ENCODE measurements at regions of chr2 and their contacts with region 1.

Region 1: GRCh38 chr2:219597552-219598307 is at the start of gene STK11IP:
- DNase-seq: peak; percentile 74 to 95 (median 90)
- ATAC-seq: peak; percentile 84
- H3K4me3 ChIP-seq: peak within 1 kb of the TSS; percentile 79 to 90
- H3K4me3 Mint-ChIP-seq: peak within 1 kb of the TSS; percentile 97
- H3K27ac ChIP-seq: peak within 1 kb of the TSS; percentile 77 to 83
- H3K27ac Mint-ChIP-seq: peak within 1 kb of the TSS; percentile 97
- H3K4me1 ChIP-seq: peaks cover 9% of the 10 kb centered on the region
- H3K4me1 Mint-ChIP-seq: peaks cover 27% of the 10 kb centered on the region
- H3K27me3 ChIP-seq: no peaks in the 10 kb centered on the region
- H3K27me3 Mint-ChIP-seq: no peaks in the 10 kb centered on the region
- CTCF ChIP-seq: no peak
- total RNA-seq, gene STK11IP: 29.7 to 31.5 TPM

Region 2: GRCh38 chr2:218406209-218406948 is 1191.4 kb before region 1 on chr2:
- CTCF ChIA-PET with region 1: no interaction called
- POLR2A ChIA-PET with region 1: no interaction called
- intact Hi-C with region 1: loop called in 1 of 2 experiments (anchors 5 kb)
- DNase-seq: peak; percentile 79 to 98 (median 95)
- ATAC-seq: peak; percentile 68
- H3K4me3 ChIP-seq: peak overlapping the region; percentile 52 to 63
- H3K4me3 Mint-ChIP-seq: peak overlapping the region; percentile 82
- H3K27ac ChIP-seq: peak overlapping the region; percentile 56 to 73
- H3K27ac Mint-ChIP-seq: peak overlapping the region; percentile 94
- H3K4me1 ChIP-seq: peaks cover 49% of the 10 kb centered on the region
- H3K4me1 Mint-ChIP-seq: peaks cover 56% of the 10 kb centered on the region
- H3K27me3 ChIP-seq: no peaks in the 10 kb centered on the region
- H3K27me3 Mint-ChIP-seq: peaks cover 2% of the 10 kb centered on the region
- CTCF ChIP-seq: peak; percentile 59

Region 3: DNA sequence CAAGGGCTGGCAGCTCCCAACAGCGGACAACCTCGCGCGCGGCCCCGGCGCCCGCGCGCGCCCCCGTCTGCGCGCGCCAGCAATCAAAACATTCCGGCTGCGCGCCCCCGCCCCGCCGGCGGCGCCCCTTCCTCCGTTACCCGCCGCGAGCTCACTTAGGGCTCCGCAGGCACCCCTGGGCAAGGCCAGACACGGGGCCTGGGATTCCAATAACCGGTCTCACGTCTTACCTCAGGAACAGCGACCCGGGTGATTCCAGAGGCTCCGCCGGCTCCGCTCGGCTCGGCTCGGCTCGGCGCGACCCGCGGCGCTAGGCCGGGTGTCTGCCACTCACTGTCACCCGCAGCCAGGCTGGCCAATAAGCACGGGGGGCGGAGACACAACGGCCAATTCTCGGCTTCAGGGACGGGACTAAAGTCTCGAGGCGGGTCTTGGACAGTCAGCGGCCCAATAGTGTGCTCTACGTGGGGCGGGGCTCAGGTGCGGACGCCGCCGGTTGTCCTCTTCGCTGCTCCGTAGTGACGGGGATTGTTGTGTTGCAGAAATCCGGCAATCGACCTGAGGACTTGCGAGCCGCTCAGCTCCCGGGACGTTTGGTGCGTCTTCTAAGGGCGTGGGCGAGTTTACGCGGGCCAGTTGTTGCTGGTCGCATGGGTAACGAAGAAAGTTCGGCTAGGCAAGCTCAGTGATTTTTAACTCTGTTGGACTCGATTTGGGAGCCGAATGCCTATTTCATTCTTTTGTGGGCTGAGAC is 368.2 kb before region 1 on chr2 and contains the starts of genes ANKZF1 and ATG9A:
- CTCF ChIA-PET with region 1: no interaction called
- POLR2A ChIA-PET with region 1: no interaction called
- intact Hi-C with region 1: loop called in 1 of 2 experiments (anchors 5 kb)
- DNase-seq: peak; percentile 95 to 99 (median 98)
- ATAC-seq: peak; percentile 96
- H3K4me3 ChIP-seq: peak within 1 kb of the TSS; percentile 83 to 93
- H3K4me3 Mint-ChIP-seq: peak within 1 kb of the TSS; percentile 99
- H3K27ac ChIP-seq: peak within 1 kb of the TSS; percentile 79 to 95
- H3K27ac Mint-ChIP-seq: peak within 1 kb of the TSS; percentile 98
- H3K4me1 ChIP-seq: peaks cover 39% of the 10 kb centered on the region
- H3K4me1 Mint-ChIP-seq: peaks cover 58% of the 10 kb centered on the region
- H3K27me3 ChIP-seq: no peaks in the 10 kb centered on the region
- H3K27me3 Mint-ChIP-seq: no peaks in the 10 kb centered on the region
- CTCF ChIP-seq: no peak
- total RNA-seq, gene ANKZF1: 97.4 to 99.5 TPM
- total RNA-seq, gene ATG9A: 103 to 116 TPM

Region 4: GRCh38 chr2:219498280-219499057 is 99.3 kb before region 1 on chr2 and contains the start of gene GMPPA:
- CTCF ChIA-PET with region 1: interaction called, 5 read pairs
- POLR2A ChIA-PET with region 1: interaction called, 5 read pairs
- intact Hi-C with region 1: loop called in 1 of 2 experiments (anchors 5 kb)
- DNase-seq: peak; percentile 82 to 95 (median 89)
- ATAC-seq: peak; percentile 90
- H3K4me3 ChIP-seq: peak within 1 kb of the TSS; percentile 75 to 83
- H3K4me3 Mint-ChIP-seq: peak within 1 kb of the TSS; percentile 89
- H3K27ac ChIP-seq: peak within 1 kb of the TSS; percentile 52 to 59
- H3K27ac Mint-ChIP-seq: peak within 1 kb of the TSS; percentile 84
- H3K4me1 ChIP-seq: peaks cover 39% of the 10 kb centered on the region
- H3K4me1 Mint-ChIP-seq: peaks cover 35% of the 10 kb centered on the region
- H3K27me3 ChIP-seq: peaks cover 25 to 34% of the 10 kb centered on the region in 2 experiments
- H3K27me3 Mint-ChIP-seq: peaks cover 33% of the 10 kb centered on the region
- CTCF ChIP-seq: no peak
- total RNA-seq, gene GMPPA: 9.4 to 15.0 TPM

Region 5: DNA sequence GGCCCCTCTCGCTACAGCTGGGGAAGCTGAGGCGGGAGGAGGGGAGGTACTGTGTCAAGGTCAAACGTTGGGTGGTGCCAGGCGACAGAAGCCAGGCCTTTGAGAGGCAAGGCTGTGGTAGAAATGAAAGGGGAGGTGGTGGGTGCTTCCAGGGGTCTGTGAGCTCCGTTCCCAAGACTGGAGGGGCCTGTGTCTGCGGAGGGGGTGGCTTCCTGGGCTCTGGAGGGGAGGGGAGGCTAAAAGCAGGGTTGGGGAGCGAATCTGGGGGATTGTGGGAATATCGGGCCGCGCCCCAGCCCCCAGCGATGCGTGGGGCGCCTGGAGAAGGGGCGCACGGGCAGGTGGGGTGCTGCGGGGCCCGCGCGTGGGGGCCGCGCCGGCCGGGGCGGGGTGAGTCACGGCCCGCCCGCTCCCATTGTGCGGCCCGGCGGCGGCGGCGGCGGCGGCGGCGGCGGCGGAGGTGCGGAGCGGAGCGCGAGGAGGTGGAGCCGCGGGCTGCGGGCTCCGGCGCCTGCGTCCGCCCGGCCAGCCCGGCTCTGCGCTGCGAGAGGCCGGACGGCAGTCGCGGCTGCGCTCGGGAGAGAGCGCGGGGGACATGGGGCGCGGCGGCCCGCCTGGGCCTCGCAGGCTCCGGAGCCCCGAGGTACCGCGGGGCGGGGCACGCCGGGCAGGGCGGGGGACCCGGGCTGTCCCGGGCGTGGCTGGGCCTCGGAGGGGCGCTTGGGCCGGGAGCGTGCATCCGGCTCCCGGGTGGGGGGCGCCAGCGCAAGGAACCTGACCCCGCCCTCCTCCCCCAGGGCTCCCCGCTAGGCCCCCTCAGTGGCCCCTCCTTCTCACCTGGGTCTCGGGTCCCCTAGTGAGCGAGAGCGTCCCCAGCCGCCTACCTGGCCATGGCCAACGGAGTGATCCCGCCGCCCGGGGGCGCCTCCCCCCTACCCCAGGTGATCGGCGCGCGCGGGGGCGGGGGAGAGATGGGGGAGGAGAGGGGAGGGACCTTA is 29.7 kb after region 1 on chr2 and contains the start of gene SLC4A3:
- CTCF ChIA-PET with region 1: no interaction called
- POLR2A ChIA-PET with region 1: no interaction called
- intact Hi-C with region 1: no loop called
- DNase-seq: peak in 2 of 9 experiments; percentile 33 to 37
- ATAC-seq: peak; percentile 62
- H3K4me3 ChIP-seq: peak within 1 kb of the TSS in 1 of 2 experiments; percentile 19
- H3K4me3 Mint-ChIP-seq: peak within 1 kb of the TSS; percentile 78
- H3K27ac ChIP-seq: no peak within 1 kb of the TSS
- H3K27ac Mint-ChIP-seq: no peak within 1 kb of the TSS
- H3K4me1 ChIP-seq: peaks cover 6% of the 10 kb centered on the region
- H3K4me1 Mint-ChIP-seq: peaks cover 4% of the 10 kb centered on the region
- H3K27me3 ChIP-seq: peaks cover 12 to 17% of the 10 kb centered on the region in 2 experiments
- H3K27me3 Mint-ChIP-seq: peaks cover 32% of the 10 kb centered on the region
- CTCF ChIP-seq: no peak
- total RNA-seq, gene SLC4A3: not detected

Region 6: DNA sequence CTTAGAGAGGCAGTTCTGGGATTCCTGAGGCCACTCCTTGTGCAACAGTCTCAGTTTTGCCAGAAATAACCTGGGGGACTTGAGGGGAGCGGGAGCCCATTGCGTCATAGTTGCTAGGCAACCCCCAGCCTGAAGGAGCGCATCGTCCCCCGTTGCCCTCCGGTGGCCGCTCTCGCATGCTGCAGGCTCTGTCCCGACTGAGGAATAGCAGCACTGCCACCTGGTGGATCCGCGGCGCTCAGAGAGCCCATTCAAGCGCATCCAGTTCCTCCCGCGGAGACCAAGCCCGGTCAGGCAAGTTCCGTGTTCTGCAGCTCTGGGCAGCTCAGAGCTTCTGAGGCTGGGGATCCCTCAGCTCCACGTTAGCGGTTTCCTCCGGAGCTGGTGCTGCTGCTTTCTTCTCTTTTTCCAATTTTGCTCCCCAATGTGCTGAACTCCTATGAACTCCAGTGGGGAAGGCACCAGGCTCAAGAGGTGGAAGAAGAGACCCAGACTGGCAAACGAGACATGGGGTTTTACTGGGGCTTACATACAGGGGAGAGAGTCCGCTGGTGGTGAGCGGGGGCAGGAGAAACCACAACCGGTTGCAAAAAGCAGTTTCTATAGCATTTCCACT is 44.8 kb after region 1 on chr2:
- CTCF ChIA-PET with region 1: interaction called, 3 read pairs
- POLR2A ChIA-PET with region 1: no interaction called
- intact Hi-C with region 1: loop called (anchors 2 kb)
- DNase-seq: peak; percentile 76 to 95 (median 89)
- ATAC-seq: peak; percentile 100
- H3K4me3 ChIP-seq: no peak overlapping the region
- H3K4me3 Mint-ChIP-seq: no peak overlapping the region
- H3K27ac ChIP-seq: no peak overlapping the region
- H3K27ac Mint-ChIP-seq: no peak overlapping the region
- H3K4me1 ChIP-seq: no peaks in the 10 kb centered on the region
- H3K4me1 Mint-ChIP-seq: peaks cover 7% of the 10 kb centered on the region
- H3K27me3 ChIP-seq: peaks cover 0 to 1% of the 10 kb centered on the region in 2 experiments
- H3K27me3 Mint-ChIP-seq: peaks cover 33% of the 10 kb centered on the region
- CTCF ChIP-seq: peak; percentile 99

Measured in CD8-positive, alpha-beta T cell (primary cell).